HEK293 (cell line): ENCODE measurements at regions of chr5 and their contacts with region 1.

Region 1: GRCh38 chr5:79464695-79465332 is 49.1 kb downstream of the HOMER1 start:
- H3K4me3 ChIP-seq: no peak overlapping the region
- H3K27ac ChIP-seq: no peak overlapping the region
- H3K4me1 ChIP-seq: no peaks in the 10 kb centered on the region
- CTCF ChIP-seq: peak; percentile 45

Region 2: GRCh38 chr5:79255786-79256557 is 208.8 kb before region 1 on chr5:
- CTCF ChIA-PET with region 1: interaction called, 18 read pairs
- POLR2A ChIA-PET with region 1: no interaction called
- H3K4me3 ChIP-seq: no peak overlapping the region
- H3K27ac ChIP-seq: no peak overlapping the region
- H3K4me1 ChIP-seq: peaks cover 5% of the 10 kb centered on the region; the same call in 1 of the 2 replicates
- CTCF ChIP-seq: peak; percentile 58

Region 3: GRCh38 chr5:79602889-79603288 is 138.1 kb after region 1 on chr5:
- CTCF ChIA-PET with region 1: no interaction called
- POLR2A ChIA-PET with region 1: no interaction called
- H3K4me3 ChIP-seq: no peak overlapping the region
- H3K27ac ChIP-seq: no peak overlapping the region
- H3K4me1 ChIP-seq: peaks cover 3% of the 10 kb centered on the region; the same call in 1 of the 2 replicates
- CTCF ChIP-seq: no peak

Region 4: DNA sequence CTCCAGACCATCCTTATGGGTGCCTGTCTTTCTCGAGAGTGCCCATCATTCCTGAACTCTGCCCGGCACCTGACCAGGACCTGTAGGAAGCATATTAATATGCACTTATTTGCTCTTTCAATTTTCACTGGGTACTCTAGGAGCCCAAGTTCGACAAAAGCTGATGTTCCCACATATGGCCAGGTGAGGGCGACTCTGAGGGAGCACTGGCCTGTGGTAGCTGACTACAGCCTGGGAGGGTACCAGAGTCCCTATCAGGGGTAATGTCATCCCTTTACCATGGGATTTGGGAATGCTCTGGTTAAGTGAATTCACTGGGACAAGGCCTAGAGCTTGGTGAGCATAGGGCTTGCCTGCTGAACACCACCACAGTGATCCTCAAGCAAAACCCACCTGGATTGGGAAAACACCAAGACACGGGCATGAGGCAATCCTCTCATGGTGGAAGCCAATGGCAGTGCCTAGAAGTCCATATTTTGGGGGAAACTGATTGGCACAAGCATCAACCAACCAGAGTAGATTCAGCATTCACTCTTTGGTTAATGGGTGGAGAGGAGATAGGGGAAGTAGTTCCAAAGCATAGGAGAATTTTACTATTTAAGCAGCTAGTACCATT is 414.0 kb after region 1 on chr5:
- CTCF ChIA-PET with region 1: no interaction called
- POLR2A ChIA-PET with region 1: no interaction called
- H3K4me3 ChIP-seq: no peak overlapping the region
- H3K27ac ChIP-seq: no peak overlapping the region
- H3K4me1 ChIP-seq: no peaks in the 10 kb centered on the region
- CTCF ChIP-seq: no peak